A673 (cell line): ENCODE measurements at regions of chr15 and their contacts with region 1.

Region 1: GRCh38 chr15:64305261-64305660 is 50.7 kb downstream of the CSNK1G1 start:
- DNase-seq: no peak
- H3K4me3 ChIP-seq: no peak overlapping the region
- H3K27ac ChIP-seq: no peak overlapping the region
- H3K4me1 ChIP-seq: no peaks in the 10 kb centered on the region
- H3K27me3 ChIP-seq: no peaks in the 10 kb centered on the region
- CTCF ChIP-seq: no peak

Region 2: GRCh38 chr15:65366122-65366892 is 1061.0 kb after region 1 on chr15:
- CTCF ChIA-PET with region 1: no interaction called
- POLR2A ChIA-PET with region 1: interaction called, 11 read pairs
- intact Hi-C with region 1: no loop called
- DNase-seq: no peak
- H3K4me3 ChIP-seq: no peak overlapping the region
- H3K27ac ChIP-seq: no peak overlapping the region
- H3K4me1 ChIP-seq: no peaks in the 10 kb centered on the region
- H3K27me3 ChIP-seq: no peaks in the 10 kb centered on the region
- CTCF ChIP-seq: no peak